Thyroid gland (tissue), 4 donors: ENCODE measurements at regions of chr1 and their contacts with region 1.

Region 1: DNA sequence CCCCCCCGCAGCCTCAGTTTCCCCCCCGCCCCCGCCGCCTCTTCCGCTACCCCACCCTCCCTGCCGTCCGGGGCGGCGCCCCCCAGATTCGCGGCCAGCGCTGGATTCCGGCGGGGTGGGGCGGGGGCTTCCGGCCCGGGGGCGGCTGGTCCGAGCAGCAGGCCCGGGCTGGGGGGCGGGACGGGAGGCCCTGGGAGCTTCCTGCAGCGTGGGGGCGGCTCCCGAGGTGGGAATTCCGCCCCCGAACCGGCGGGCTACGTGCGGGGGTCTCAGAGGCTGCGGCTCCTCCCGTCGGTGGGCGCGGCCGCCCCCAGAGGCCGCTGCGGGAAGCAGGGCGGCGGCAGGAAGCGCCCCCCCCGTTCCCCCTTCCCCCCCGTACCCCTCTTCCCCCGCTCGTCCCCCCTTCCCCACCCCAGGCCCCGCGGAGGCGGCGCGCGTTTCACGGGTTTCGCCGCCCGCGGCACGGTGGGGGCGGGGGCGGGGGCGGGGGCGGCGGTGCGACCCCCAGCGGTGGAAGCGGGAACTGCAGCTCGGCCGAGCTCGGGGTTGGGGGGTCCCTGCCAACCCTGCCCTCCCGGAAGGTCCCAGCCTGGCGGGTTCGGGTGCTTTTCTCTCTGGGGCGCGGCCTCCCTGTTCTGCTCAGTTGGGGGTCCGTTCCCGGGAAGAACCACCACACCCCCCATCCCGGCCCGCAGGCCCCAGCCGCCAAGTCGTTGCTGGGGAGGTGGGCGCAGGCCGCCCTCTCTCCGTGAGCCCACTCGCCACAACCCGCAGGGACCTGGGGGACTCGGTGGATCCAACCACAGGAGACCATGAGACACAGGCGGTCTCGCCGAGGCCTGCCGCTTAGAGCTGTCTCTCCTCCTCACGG is 76.3 kb downstream of the MORN1 start:
- DNase-seq: peak; percentile 56 to 65
- H3K4me3 ChIP-seq: peak overlapping the region in 2 of 3 donors; percentile 32 to 71
- H3K27ac ChIP-seq: peak overlapping the region; percentile 95 to 96 (median 96)
- H3K4me1 ChIP-seq: peaks cover 22 to 78% of the 10 kb centered on the region in 2 donors
- H3K27me3 ChIP-seq: no peaks in the 10 kb centered on the region
- CTCF ChIP-seq: peak; percentile 45 to 100 (median 79)
- POLR2A ChIP-seq: no peak

Region 2: GRCh38 chr1:2212542-2213491 is 102.2 kb before region 1 on chr1:
- intact Hi-C with region 1: loop called (anchors 5 kb)
- DNase-seq: peak; percentile 93 to 95
- H3K4me3 ChIP-seq: peak overlapping the region in 1 of 3 donors; percentile 10
- H3K27ac ChIP-seq: peak overlapping the region; percentile 98 to 99 (median 98)
- H3K4me1 ChIP-seq: peaks cover 44 to 61% of the 10 kb centered on the region in 2 donors
- H3K27me3 ChIP-seq: no peaks in the 10 kb centered on the region
- CTCF ChIP-seq: peak in 5 of 6 experiments; percentile 17 to 44 (median 27)
- POLR2A ChIP-seq: peak in 1 of 2 donors; percentile 69

Region 3: GRCh38 chr1:2233997-2234761 is 80.9 kb before region 1 on chr1:
- intact Hi-C with region 1: loop called (anchors 5 kb)
- DNase-seq: peak; percentile 82 to 87
- H3K4me3 ChIP-seq: peak overlapping the region in 1 of 3 donors; percentile 23
- H3K27ac ChIP-seq: peak overlapping the region; percentile 75 to 84 (median 78)
- H3K4me1 ChIP-seq: peaks cover 96 to 98% of the 10 kb centered on the region in 2 donors
- H3K27me3 ChIP-seq: no peaks in the 10 kb centered on the region
- CTCF ChIP-seq: no peak
- POLR2A ChIP-seq: no peak

Region 4: DNA sequence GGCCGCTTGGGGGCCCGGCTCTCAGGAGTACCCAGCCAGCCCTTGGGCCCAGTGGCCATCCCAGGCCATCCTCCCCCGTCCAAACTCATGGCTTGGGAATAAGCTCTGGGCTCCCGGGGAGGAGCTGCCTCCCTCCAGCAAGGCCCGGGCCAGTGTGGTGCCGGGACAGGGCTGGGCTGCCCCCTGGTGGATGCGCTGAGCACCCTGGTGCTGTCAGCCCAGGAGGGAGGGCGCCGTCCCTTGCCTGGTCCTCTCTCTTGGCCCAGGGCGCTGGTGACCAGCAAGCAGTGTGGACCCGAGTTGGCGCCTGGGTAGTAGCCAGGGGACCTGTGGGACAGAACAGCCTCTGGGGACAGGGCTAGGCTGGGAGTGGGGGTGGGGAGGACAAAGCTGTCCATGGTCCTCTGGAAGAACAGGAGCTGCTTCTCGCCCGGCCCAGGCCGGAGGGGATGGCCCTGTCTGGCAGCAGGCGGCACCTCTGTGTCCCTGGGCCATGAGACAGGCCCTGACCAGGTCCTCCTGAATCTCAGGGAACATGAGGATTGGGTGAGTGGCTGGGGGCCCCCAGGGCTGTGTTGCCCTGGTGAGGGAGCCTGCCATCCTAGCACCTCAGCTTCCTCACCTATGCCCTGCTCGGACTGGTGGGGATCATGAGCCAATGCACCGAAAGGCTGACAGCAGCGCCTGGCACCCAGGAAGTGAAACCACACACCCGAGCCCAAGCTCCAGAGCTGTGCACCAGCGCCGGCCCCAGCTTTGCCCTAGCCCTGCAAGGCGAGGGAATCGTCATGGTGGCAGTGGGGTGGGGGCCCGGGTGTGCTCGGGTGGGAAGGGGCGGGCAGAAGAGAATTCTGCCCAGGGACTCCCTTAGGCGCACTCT is 66.9 kb after region 1 on chr1:
- intact Hi-C with region 1: loop called (anchors 10 kb)
- DNase-seq: peak; percentile 79 to 81
- H3K4me3 ChIP-seq: no peak overlapping the region
- H3K27ac ChIP-seq: no peak overlapping the region
- H3K4me1 ChIP-seq: no peaks in the 10 kb centered on the region
- H3K27me3 ChIP-seq: no peaks in the 10 kb centered on the region
- CTCF ChIP-seq: peak; percentile 53 to 97 (median 91)
- POLR2A ChIP-seq: no peak